Posterior vena cava (tissue), 2 donors: ENCODE measurements at regions of chr22 and their contacts with region 1.

Region 1: DNA sequence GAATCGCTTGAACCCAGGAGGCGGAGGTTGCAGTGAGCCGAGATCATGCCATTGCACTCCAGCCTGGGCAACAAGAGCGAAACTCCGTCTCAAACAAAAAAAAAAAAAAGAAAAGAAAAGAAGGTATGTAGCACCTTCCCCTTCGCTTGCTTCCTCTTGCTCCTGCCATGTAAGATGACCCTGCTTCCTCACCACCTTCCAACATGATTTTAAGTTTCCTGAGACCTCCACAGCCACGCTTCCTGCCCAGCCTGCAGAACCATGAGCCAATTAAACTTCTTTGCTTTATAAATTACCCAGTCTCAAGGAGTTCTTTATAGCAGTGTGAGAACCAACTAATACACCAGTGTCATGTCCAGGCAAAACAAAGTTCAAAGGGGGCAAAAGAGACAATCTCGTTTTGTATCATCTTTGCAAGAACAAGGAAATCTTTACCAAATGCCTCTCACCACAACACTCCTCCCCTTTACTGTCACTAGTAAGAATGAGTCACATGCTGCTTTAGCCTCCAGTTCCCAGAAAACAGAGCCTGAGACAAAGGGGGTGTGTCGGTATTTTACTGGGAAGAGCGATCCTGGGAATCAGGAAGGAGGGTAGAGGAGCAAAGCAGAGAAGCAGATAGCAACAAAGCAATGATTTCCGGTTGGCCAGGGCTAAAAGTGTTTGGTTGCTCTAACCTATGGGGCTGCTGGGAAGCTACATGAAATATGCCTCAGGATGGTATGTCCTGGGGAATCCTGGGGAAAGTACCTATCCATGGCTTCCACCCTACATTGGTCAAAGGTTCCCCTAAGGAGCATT is 10.5 kb upstream of the MCHR1 start:
- DNase-seq: no peak

Region 2: GRCh38 chr22:40803321-40803720 is 134.5 kb after region 1 on chr22:
- intact Hi-C with region 1: loop called in 1 of 2 experiments (anchors 5 kb)
- DNase-seq: no peak